Pancreas (tissue), 10 donors: ENCODE measurements at regions of chr15 and their contacts with region 1.

Region 1: DNA sequence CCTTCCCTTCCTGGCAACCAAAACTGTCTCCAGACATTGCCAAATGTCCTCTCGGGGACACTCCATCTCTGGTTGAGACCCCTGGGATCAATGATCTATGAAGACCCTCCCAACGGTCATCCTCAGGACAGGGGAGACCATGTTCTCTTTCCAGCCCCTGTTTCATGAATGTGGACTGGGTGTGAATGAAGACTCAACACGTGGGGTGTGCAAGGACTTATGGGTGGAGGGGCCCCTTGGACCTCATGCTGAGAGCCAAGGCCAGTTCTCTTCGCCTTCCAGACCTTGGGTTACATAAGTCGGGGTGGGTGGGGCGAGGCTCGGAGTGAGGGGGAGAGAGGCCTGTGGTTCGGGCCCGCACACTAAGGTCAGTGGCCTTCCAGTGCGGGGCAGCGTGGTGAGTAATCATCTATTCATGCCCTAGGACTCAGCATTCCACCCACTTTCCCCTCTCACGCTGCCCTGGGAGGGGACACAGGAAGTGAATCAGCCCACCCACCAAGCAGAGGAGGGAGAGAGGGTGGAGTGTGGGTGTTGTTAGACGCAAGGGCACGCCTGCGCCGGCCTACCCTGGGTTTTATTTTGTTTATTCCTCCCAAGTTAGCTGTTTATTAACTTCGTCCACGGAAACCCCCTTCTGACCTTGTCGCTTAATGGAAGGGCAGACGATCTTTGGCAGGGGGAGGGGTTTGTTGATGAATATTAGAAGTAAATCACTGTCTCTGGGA is 6.7 kb downstream of the PAQR5 start:
- DNase-seq: peak in 4 of 6 donors; percentile 34 to 54 (median 40)
- ATAC-seq: peak; percentile 53 to 86 (median 84)
- H3K4me3 ChIP-seq: no peak overlapping the region
- H3K27ac ChIP-seq: peak overlapping the region; percentile 17 to 58 (median 40)
- H3K4me1 ChIP-seq: no peaks in the 10 kb centered on the region
- H3K27me3 ChIP-seq: no peaks in the 10 kb centered on the region
- CTCF ChIP-seq: no peak

Region 2: GRCh38 chr15:69357773-69358771 is 52.7 kb after region 1 on chr15:
- intact Hi-C with region 1: no loop called
- DNase-seq: peak in 4 of 6 donors; percentile 37 to 45 (median 40)
- ATAC-seq: peak; percentile 78 to 99 (median 89)
- H3K4me3 ChIP-seq: no peak overlapping the region
- H3K27ac ChIP-seq: peak overlapping the region in 3 of 4 donors; percentile 1 to 27 (median 3)
- H3K4me1 ChIP-seq: peaks cover 0 to 3% (median 0%) of the 10 kb centered on the region in 3 donors
- H3K27me3 ChIP-seq: no peaks in the 10 kb centered on the region
- CTCF ChIP-seq: no peak

Region 3: DNA sequence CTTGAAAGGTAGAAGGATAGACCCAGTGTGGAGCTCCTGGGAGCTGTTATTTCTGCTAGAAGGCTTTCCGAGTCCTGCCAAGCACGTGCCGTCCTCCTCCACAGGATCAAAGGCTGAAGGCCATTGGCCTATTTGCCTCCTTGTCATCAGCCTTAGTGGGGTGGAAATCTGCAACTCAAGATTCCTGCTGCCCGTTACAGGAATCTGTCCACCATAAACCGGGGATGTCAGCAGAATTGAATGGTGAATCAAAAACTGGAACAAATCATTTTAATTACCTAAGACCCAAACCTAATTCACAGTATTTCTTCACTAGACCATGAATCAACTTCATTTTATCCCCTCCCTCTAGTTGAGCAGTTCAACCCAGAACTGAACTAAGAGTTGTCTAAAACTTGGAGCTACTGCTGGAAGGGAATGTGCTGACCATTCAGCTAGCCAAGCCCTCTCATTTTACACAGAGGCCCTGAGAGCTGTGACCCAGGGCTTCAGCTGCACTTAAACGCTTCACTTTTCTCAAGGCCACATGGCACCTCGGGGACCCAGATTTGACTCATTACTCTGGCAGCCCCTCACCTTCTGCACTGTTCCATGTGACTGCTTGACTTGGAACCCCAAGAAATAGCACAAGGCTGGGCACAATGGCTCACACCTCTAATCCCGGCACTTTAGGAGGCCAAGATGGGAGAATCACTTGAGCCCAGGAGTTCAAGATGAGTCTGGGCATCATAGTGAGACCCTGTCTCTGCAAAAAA is 72.0 kb after region 1 on chr15:
- intact Hi-C with region 1: loop called in 1 of 3 experiments (anchors 10 kb)
- DNase-seq: no peak
- ATAC-seq: no peak
- H3K4me3 ChIP-seq: no peak overlapping the region
- H3K27ac ChIP-seq: no peak overlapping the region
- H3K4me1 ChIP-seq: no peaks in the 10 kb centered on the region
- H3K27me3 ChIP-seq: no peaks in the 10 kb centered on the region
- CTCF ChIP-seq: no peak